Activated B cell treated with CpG ODN at 0.5 μM for 24 hours (primary cell): ENCODE measurements at regions of chr1 and their contacts with region 1.

Region 1: DNA sequence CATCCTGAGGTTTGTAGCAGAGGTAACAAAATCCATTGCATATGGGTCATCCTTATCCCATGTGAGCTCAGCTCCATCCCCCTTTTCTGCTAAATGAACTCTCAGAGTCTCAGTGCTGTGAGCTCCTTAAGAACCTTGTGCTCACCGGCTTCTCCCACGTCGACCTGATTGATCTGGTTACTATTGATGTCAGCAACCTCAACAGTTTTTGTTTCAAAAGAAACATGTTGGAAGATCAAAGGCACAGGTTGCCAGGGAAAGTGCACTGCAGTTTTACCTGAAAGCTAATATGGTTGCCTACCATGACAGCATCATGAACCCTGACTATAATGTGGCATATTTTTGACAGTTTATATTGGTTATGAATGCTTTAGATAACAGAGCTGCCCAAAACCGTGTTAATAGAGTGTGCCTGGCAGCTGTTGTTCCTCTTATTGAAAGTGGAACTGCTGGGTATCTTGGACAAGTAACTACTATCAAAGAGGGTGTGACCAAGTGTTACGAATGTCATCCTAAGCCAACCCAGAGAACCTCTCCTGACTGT is 131.4 kb downstream of the HS2ST1 start:
- DNase-seq: no peak
- ATAC-seq: peak; percentile 78
- H3K4me3 Mint-ChIP-seq: peak overlapping the region; percentile 1
- H3K27ac Mint-ChIP-seq: peak overlapping the region; percentile 87
- H3K4me1 Mint-ChIP-seq: peaks cover 45% of the 10 kb centered on the region
- H3K27me3 Mint-ChIP-seq: no peaks in the 10 kb centered on the region
- CTCF ChIP-seq: no peak

Region 2: DNA sequence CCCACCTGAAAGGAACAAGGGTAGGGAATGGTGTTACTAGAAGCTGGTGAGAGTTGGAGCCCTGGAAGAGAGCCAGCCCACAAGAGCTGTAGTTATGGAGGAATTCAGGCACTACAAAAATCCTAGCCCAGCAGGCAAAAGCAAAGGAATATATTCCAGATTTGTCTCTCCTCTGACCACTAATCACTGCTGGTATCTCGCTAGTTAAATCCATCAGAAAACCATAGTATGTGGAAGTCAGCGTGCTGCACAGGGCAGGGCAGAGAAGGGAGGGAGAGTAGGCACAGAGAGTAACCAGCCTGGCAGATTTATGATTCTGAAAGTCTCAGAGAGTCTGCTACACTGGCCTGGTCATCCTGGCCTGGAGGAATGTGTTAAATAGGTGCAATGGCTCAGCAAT is 220.5 kb before region 1 on chr1:
- CTCF ChIA-PET with region 1: no interaction called
- POLR2A ChIA-PET with region 1: no interaction called
- intact Hi-C with region 1: no loop called
- DNase-seq: no peak
- ATAC-seq: no peak
- H3K4me3 Mint-ChIP-seq: no peak overlapping the region
- H3K27ac Mint-ChIP-seq: no peak overlapping the region
- H3K4me1 Mint-ChIP-seq: no peaks in the 10 kb centered on the region
- H3K27me3 Mint-ChIP-seq: no peaks in the 10 kb centered on the region
- CTCF ChIP-seq: no peak

Region 3: GRCh38 chr1:87017998-87018672 is 27.7 kb before region 1 on chr1:
- CTCF ChIA-PET with region 1: no interaction called
- POLR2A ChIA-PET with region 1: no interaction called
- intact Hi-C with region 1: no loop called
- DNase-seq: no peak
- ATAC-seq: no peak
- H3K4me3 Mint-ChIP-seq: no peak overlapping the region
- H3K27ac Mint-ChIP-seq: no peak overlapping the region
- H3K4me1 Mint-ChIP-seq: peaks cover 10% of the 10 kb centered on the region
- H3K27me3 Mint-ChIP-seq: no peaks in the 10 kb centered on the region
- CTCF ChIP-seq: no peak

Region 4: GRCh38 chr1:87030740-87031690 is 14.8 kb before region 1 on chr1:
- CTCF ChIA-PET with region 1: no interaction called
- POLR2A ChIA-PET with region 1: no interaction called
- intact Hi-C with region 1: loop called (anchors 2 kb)
- DNase-seq: no peak
- ATAC-seq: no peak
- H3K4me3 Mint-ChIP-seq: no peak overlapping the region
- H3K27ac Mint-ChIP-seq: no peak overlapping the region
- H3K4me1 Mint-ChIP-seq: peaks cover 17% of the 10 kb centered on the region
- H3K27me3 Mint-ChIP-seq: no peaks in the 10 kb centered on the region
- CTCF ChIP-seq: no peak